Activated B cell treated with CpG ODN at 0.5 μM for 24 hours (primary cell): ENCODE measurements at regions of chr13 and their contacts with region 1.

Region 1: DNA sequence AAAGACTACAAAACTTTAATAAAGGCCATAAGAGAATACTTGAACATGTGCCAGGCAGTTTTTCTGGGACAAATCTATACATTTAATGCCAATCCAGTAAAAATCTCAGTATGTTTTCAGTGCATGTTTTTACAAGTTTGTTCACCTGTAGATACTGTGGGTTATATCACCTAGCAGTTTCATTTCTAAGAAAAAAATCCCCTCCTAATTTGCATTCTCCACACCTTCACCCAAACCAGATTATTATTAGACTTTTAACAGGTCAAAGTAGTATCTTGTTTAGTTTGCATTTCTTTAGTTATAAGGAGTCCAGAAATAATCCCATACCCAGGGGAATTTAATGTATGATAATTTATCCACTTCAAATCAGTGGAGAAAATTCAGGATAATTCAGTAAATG is 17.0 kb upstream of the LPAR6 start:
- DNase-seq: no peak
- ATAC-seq: no peak
- H3K4me3 Mint-ChIP-seq: no peak overlapping the region
- H3K27ac Mint-ChIP-seq: no peak overlapping the region
- H3K4me1 Mint-ChIP-seq: peaks cover 21% of the 10 kb centered on the region
- H3K27me3 Mint-ChIP-seq: no peaks in the 10 kb centered on the region
- CTCF ChIP-seq: no peak

Region 2: DNA sequence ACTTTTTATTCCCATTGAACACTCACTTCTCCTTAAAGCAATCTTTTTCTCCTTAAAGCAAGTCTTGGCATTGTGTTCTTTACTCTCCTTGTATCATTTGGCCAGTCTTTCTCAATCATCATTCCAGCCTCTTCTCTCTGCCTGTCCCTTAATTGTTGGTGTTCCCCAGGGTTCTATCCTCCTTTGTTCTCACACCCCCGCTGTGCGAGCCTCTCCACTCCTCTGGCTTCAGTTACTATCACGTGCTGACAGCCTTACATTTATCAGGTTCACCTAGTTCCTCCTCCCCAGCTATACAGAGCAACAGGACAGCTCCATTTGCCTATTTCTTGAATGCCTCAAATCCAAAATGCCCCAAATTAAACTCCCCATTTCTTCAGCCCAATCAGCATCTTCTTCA is 248.4 kb after region 1 on chr13:
- CTCF ChIA-PET with region 1: no interaction called
- POLR2A ChIA-PET with region 1: interaction called, 11 read pairs
- intact Hi-C with region 1: no loop called
- DNase-seq: no peak
- ATAC-seq: no peak
- H3K4me3 Mint-ChIP-seq: no peak overlapping the region
- H3K27ac Mint-ChIP-seq: no peak overlapping the region
- H3K4me1 Mint-ChIP-seq: no peaks in the 10 kb centered on the region
- H3K27me3 Mint-ChIP-seq: peaks cover 8% of the 10 kb centered on the region
- CTCF ChIP-seq: no peak